ENCODE measurements at regions of chr17 and their contacts with region 1.

Region 1: DNA sequence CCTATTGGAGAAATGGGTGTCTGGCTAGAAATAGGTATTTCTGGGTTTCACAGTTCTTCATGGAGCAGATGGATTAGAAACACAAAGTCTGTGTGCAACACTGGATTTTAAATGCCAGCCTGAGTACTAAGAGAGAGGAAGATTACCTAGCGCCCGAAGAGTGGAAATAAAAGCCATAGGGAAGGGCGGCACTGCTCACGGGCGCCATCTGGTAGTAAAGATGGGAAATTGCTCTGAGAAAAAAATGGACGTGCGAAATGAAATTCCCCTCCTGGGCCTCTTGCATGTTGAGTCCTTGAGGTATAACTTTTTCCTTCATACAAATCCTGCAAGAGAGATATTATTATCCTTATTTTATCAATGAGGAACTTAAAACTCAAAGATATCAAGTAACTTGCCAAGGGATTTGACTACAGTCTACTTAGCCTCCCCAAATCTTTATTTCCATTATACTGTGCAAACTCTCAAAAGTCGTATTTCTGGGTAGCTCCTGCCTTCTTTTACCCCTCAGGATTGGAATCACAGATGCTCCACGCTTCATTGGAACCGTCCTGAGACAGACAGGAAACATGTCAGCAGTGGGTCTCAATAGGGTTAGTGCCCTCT is 72.8 kb downstream of the MMD start:
- DNase-seq: peak in 4 of 5 donors; percentile 16 to 37 (median 34)
- ATAC-seq: peak in 3 of 4 donors; percentile 69 to 78 (median 76)
- H3K4me3 ChIP-seq: no peak overlapping the region
- H3K27ac ChIP-seq: no peak overlapping the region
- H3K4me1 ChIP-seq: peaks cover 0 to 9% (median 0%) of the 10 kb centered on the region in 12 donors
- H3K27me3 ChIP-seq: no peaks in the 10 kb centered on the region
- CTCF ChIP-seq: peak; percentile 77 to 95 (median 85)
- POLR2A ChIP-seq: no peak

Region 2: GRCh38 chr17:54985476-54985875 is 363.4 kb before region 1 on chr17:
- intact Hi-C with region 1: loop called in 3 of 10 experiments (anchors 5 kb)
- DNase-seq: no peak
- ATAC-seq: no peak
- H3K4me3 ChIP-seq: no peak overlapping the region
- H3K27ac ChIP-seq: no peak overlapping the region
- H3K4me1 ChIP-seq: peaks cover 0 to 3% (median 0%) of the 10 kb centered on the region in 12 donors
- H3K27me3 ChIP-seq: no peaks in the 10 kb centered on the region
- CTCF ChIP-seq: no peak
- POLR2A ChIP-seq: no peak

Region 3: GRCh38 chr17:55053855-55054254 is 295.0 kb before region 1 on chr17:
- intact Hi-C with region 1: loop called in 5 of 10 experiments (anchors 5 to 10 kb)
- DNase-seq: no peak
- ATAC-seq: no peak
- H3K4me3 ChIP-seq: no peak overlapping the region
- H3K27ac ChIP-seq: no peak overlapping the region
- H3K4me1 ChIP-seq: no peaks in the 10 kb centered on the region
- H3K27me3 ChIP-seq: no peaks in the 10 kb centered on the region
- CTCF ChIP-seq: peak in 11 of 12 donors; percentile 11 to 54 (median 25)
- POLR2A ChIP-seq: no peak

Region 4: GRCh38 chr17:55324296-55324978 is 24.4 kb before region 1 on chr17:
- intact Hi-C with region 1: no loop called
- DNase-seq: no peak
- ATAC-seq: no peak
- H3K4me3 ChIP-seq: no peak overlapping the region
- H3K27ac ChIP-seq: no peak overlapping the region
- H3K4me1 ChIP-seq: peaks cover 0 to 3% (median 0%) of the 10 kb centered on the region in 12 donors
- H3K27me3 ChIP-seq: no peaks in the 10 kb centered on the region
- CTCF ChIP-seq: no peak
- POLR2A ChIP-seq: no peak

Region 5: GRCh38 chr17:55383771-55384642 is 35.2 kb after region 1 on chr17:
- intact Hi-C with region 1: no loop called
- DNase-seq: no peak
- ATAC-seq: no peak
- H3K4me3 ChIP-seq: no peak overlapping the region
- H3K27ac ChIP-seq: peak overlapping the region in 1 of 12 donors; percentile 3
- H3K4me1 ChIP-seq: peaks cover 0 to 12% (median 0%) of the 10 kb centered on the region in 12 donors
- H3K27me3 ChIP-seq: no peaks in the 10 kb centered on the region
- CTCF ChIP-seq: no peak
- POLR2A ChIP-seq: no peak

Measured in heart left ventricle (tissue), 16 donors.